ENCODE measurements at regions of chr11 and their contacts with region 1.

Region 1: DNA sequence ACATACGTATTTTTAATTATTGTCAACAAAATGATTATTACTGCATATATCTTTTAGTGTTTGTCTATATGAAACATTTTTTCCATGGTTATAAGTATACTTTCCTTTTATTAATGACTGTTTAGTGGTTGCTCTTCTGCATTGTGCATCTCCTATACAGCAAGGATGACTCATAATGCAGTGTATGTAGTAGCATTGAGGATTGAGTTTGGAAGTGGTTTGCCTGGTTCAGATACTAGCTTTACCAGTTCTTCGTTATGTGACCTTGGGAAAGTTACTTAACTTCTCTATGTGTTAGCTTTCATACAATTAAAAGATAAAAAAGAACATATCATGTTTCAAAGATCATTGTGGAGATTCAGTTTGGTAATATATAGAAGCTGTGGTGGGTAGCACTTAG is 44.1 kb downstream of the CHORDC1 start:
- DNase-seq: no peak

Region 2: DNA sequence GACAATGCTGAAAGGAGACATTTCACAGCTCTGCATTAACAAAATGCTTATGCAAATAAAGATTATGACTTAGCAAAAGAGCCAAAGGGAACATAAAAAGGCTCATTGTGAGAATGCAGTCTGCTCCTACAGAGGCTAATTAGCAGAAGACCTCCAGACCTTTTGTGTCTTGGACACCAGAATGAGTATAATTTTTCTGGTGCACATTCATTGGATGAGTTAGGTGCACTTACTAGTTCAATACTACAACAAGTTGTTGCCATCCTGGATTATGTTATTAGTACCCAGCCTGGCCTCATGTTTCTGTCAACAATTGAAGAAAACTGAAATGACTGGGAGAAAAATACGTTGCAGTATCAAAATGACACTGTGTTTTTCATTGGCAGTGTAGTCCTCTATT is 657.3 kb after region 1 on chr11:
- intact Hi-C with region 1: loop called in 1 of 2 experiments (anchors 5 kb)
- DNase-seq: no peak